ENCODE measurements at regions of chr5 and their contacts with region 1.

Region 1: DNA sequence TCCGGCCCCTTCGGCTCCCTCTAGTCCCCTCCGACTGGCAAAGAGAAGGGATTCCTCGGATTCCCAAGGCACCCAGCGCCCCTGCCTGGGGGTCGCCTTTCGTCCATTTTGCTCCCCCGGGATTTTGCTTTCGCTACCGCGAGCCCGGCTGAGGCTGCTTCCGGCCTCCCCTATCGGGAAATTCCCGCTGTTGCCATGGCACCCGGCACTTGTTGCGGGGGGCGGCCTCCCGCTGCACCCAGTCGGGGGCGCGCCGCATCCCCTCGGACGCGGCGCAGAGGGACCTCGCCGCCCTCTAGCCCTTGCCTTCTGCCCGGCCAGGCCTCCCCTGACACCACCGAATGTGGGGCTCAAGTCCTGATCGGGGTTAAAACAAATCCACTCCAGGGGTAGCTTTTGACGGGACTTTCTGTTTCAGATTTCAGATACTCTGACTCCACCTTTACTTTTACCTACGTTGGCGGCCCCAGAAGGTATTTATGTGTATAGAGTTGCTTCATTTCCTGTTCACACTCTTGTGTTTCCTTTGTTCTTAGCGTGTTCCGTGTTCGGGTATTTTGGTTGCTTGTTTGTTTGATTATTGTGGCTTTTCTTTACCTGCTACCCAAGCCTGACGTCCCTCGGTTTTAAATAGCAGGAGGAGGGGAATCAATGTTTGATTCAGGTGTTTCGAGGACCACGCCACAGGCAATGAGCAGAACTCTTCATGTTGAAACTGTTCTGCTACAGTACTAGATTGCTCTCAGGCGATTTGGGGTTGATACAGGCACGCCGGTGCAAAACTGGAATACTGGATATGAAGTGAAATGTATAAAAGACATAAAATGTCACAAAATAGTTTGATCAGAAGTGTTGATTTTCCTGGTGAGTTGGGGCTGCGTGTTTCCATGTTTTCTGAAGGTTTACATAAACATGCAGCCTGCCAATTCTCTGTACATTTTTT is 1.5 kb downstream of the PARP8 start:
- DNase-seq: peak; percentile 90
- ATAC-seq: peak; percentile 76
- H3K4me3 Mint-ChIP-seq: peak overlapping the region; percentile 90
- H3K27ac Mint-ChIP-seq: peak overlapping the region; percentile 99
- H3K4me1 Mint-ChIP-seq: peaks cover 43% of the 10 kb centered on the region
- H3K27me3 Mint-ChIP-seq: no peaks in the 10 kb centered on the region
- CTCF ChIP-seq: no peak

Region 2: GRCh38 chr5:50547303-50547702 is 120.6 kb before region 1 on chr5:
- CTCF ChIA-PET with region 1: no interaction called
- POLR2A ChIA-PET with region 1: no interaction called
- intact Hi-C with region 1: no loop called
- DNase-seq: no peak
- ATAC-seq: no peak
- H3K4me3 Mint-ChIP-seq: no peak overlapping the region
- H3K27ac Mint-ChIP-seq: no peak overlapping the region
- H3K4me1 Mint-ChIP-seq: peaks cover 7% of the 10 kb centered on the region
- H3K27me3 Mint-ChIP-seq: no peaks in the 10 kb centered on the region
- CTCF ChIP-seq: no peak

Region 3: DNA sequence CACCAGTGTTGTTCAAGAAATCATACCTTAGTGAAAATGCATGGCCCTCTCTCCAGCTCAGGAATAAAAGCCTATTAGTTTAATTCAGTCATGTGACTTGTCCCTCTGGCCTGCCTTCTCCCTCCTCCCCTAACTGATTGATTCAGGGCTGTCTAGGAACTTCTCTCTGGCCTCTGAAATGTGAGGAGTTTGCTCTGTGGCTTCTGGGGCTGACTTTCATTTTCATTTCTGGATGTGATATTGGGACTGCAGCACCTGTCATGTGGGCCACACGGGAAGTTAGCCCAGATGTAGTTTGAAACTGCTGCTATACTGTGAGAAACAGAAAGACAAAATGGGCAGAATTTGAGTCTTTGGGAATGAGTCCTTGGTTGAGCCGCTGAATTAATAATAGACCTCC is 43.3 kb after region 1 on chr5:
- CTCF ChIA-PET with region 1: interaction called, 3 read pairs
- POLR2A ChIA-PET with region 1: no interaction called
- intact Hi-C with region 1: loop called (anchors 5 kb)
- DNase-seq: peak; percentile 77
- ATAC-seq: peak; percentile 90
- H3K4me3 Mint-ChIP-seq: peak overlapping the region; percentile 64
- H3K27ac Mint-ChIP-seq: peak overlapping the region; percentile 86
- H3K4me1 Mint-ChIP-seq: peaks cover 82% of the 10 kb centered on the region
- H3K27me3 Mint-ChIP-seq: no peaks in the 10 kb centered on the region
- CTCF ChIP-seq: no peak

Region 4: DNA sequence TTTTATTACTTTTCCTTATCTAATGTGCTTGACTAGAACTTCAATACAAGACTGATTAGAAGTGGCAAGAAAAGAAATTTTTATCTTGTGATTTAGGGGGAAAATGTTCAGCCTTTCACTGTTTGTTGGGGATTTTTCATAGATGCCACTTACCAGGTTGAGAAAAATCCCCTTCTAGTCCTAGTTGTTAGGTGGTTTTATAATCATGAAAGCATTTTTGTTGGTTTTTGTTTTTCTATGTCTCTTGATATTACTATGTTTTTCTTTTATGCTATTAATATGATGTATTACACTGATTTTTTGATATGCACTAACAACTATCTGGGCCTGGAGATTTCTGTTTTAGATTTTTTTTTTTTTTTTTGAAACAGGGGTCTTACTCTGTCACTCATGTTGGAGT is 132.5 kb after region 1 on chr5:
- CTCF ChIA-PET with region 1: no interaction called
- POLR2A ChIA-PET with region 1: no interaction called
- intact Hi-C with region 1: no loop called
- DNase-seq: no peak
- ATAC-seq: no peak
- H3K4me3 Mint-ChIP-seq: no peak overlapping the region
- H3K27ac Mint-ChIP-seq: no peak overlapping the region
- H3K4me1 Mint-ChIP-seq: peaks cover 24% of the 10 kb centered on the region
- H3K27me3 Mint-ChIP-seq: no peaks in the 10 kb centered on the region
- CTCF ChIP-seq: no peak

Measured in activated CD8-positive, alpha-beta T cell treated with anti-CD3 and anti-CD28 coated beads for 36 hours (primary cell).